ENCODE measurements at regions of chr20 and their contacts with region 1.

Region 1: DNA sequence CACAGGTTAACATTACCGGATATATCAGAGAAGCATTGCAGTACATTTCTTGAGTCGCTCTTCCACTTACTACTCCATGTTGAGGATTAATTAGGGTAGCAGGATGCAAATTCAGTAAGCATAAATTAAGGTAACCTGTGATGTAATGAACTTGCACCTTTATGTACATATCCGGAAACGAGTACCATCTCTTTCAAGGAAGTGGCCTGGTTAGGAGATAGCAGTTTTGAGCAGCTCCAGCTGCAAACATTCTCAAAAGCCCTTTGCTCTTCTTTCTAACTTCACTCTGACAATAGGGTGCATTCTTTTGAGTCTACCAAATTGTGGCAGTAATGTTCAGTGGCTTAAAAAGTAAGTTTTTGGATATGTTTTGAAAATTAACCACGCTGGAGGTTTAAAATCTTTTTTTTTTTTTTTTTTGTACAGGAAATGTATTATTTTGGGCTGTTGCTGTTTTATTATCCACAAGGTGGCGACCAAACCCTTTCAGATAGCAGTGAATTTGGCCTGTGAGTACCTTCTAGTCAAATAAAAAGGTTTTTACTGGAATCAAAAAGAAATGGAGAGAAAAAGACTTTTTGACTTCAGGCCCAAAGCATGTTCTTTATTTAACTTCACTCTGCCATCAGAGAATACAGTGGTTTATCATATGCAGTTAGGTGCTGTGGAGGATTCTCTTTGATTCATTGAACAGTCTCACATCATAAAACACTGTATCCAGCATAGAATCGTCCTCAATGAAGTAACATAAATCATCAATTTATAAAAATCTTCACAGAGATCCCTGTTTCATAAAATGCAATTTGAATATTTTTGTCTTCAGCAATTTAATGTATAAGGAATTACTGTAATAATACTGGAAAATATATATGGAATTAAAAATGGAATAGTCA is 8.9 kb downstream of the FAM217B start:
- DNase-seq: peak in 7 of 9 donors; percentile 56 to 76 (median 72)
- ATAC-seq: peak; percentile 90
- H3K4me3 ChIP-seq: no peak overlapping the region
- H3K4me3 Mint-ChIP-seq: peak overlapping the region in 9 of 10 donors; percentile 34 to 80 (median 70)
- H3K27ac ChIP-seq: peak overlapping the region; percentile 55
- H3K27ac Mint-ChIP-seq: peak overlapping the region; percentile 82 to 95 (median 89)
- H3K4me1 ChIP-seq: peaks cover 0 to 10% of the 10 kb centered on the region in 2 donors
- H3K4me1 Mint-ChIP-seq: peaks cover 11 to 38% (median 22%) of the 10 kb centered on the region in 7 donors
- H3K27me3 ChIP-seq: no peaks in the 10 kb centered on the region
- H3K27me3 Mint-ChIP-seq: no peaks in the 10 kb centered on the region

Region 2: GRCh38 chr20:60057123-60057801 is 108.2 kb after region 1 on chr20:
- CTCF ChIA-PET with region 1: no interaction called
- POLR2A ChIA-PET with region 1: no interaction called
- intact Hi-C with region 1: loop called (anchors 1 kb)
- DNase-seq: peak; percentile 40 to 76 (median 68)
- ATAC-seq: peak; percentile 46
- H3K4me3 ChIP-seq: peak overlapping the region; percentile 41
- H3K4me3 Mint-ChIP-seq: peak overlapping the region; percentile 46 to 83 (median 58)
- H3K27ac ChIP-seq: no peak overlapping the region
- H3K27ac Mint-ChIP-seq: peak overlapping the region; percentile 4 to 90 (median 83)
- H3K4me1 ChIP-seq: peaks cover 46 to 47% of the 10 kb centered on the region in 2 donors
- H3K4me1 Mint-ChIP-seq: peaks cover 43 to 67% (median 58%) of the 10 kb centered on the region in 7 donors
- H3K27me3 ChIP-seq: no peaks in the 10 kb centered on the region
- H3K27me3 Mint-ChIP-seq: peaks cover 0 to 8% (median 0%) of the 10 kb centered on the region in 5 donors

Region 3: DNA sequence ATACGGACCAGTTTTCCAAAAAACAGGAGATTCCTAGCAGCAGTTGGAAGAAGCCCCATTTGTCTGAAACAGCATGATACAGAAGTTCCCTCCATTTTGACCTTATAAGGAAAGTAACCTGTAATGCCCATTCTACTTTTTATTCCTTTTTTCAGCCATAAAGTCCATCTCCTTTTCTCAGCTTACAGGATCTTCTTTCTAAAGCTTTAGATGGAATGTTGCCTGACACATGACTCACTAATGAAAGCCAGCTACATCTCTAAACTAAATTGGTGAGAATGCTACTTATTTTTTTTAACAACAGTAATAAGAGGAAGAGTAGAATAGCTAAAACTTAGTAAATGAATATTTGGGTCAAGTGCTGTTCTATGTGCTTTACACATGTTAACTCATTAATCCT is 243.3 kb after region 1 on chr20:
- CTCF ChIA-PET with region 1: no interaction called
- POLR2A ChIA-PET with region 1: no interaction called
- intact Hi-C with region 1: no loop called
- DNase-seq: no peak
- ATAC-seq: no peak
- H3K4me3 ChIP-seq: no peak overlapping the region
- H3K4me3 Mint-ChIP-seq: no peak overlapping the region
- H3K27ac ChIP-seq: no peak overlapping the region
- H3K27ac Mint-ChIP-seq: no peak overlapping the region
- H3K4me1 ChIP-seq: no peaks in the 10 kb centered on the region
- H3K4me1 Mint-ChIP-seq: peaks cover 0 to 1% (median 0%) of the 10 kb centered on the region in 7 donors
- H3K27me3 ChIP-seq: no peaks in the 10 kb centered on the region
- H3K27me3 Mint-ChIP-seq: peaks cover 0 to 22% (median 10%) of the 10 kb centered on the region in 5 donors

Region 4: DNA sequence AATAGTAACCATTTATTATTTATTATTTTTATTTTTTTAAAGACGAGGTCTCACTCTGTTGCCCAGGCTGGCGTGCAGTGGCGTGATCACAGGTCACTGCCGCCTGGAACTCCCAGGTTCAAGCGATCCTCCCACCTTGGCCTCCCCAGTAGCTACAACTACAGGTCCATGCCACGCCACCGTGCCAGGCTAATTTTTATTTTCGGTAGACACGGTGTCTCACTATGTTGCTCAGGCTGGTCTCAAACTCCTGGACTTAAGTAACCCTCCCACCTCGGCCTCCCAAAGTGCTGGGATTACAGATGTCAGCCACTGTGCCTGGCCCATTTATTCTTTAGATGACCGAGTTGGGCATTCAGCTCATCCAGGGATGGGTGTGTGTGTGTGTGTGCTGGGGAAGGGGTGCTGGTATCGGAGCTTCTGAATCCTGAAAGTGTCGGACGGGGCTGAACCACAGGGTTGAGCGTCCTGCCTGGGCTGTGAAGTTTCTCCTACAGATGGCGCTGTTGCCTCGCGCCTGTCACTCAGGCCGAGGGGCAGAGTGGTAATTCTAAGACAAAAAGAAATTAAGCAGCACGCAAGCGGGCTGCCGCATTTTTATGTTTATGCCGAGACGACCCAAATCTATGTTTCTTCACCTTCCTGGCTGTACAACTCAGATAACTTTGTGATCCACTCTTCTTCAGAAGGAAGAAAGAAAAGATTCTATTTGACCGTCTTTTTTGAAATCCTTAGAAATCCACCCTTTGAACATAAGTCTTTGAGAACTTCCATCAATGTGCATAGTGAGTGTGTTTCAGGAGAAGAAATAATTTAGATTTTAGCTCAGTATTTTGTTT is 261.9 kb after region 1 on chr20:
- CTCF ChIA-PET with region 1: no interaction called
- POLR2A ChIA-PET with region 1: no interaction called
- intact Hi-C with region 1: loop called in 1 of 2 experiments (anchors 5 kb)
- DNase-seq: peak in 8 of 9 donors; percentile 20 to 61 (median 46)
- ATAC-seq: peak; percentile 81
- H3K4me3 ChIP-seq: no peak overlapping the region
- H3K4me3 Mint-ChIP-seq: peak overlapping the region in 1 of 10 donors; percentile 20
- H3K27ac ChIP-seq: no peak overlapping the region
- H3K27ac Mint-ChIP-seq: no peak overlapping the region
- H3K4me1 ChIP-seq: no peaks in the 10 kb centered on the region
- H3K4me1 Mint-ChIP-seq: peaks cover 0 to 17% (median 4%) of the 10 kb centered on the region in 7 donors
- H3K27me3 ChIP-seq: no peaks in the 10 kb centered on the region
- H3K27me3 Mint-ChIP-seq: peaks cover 0 to 16% (median 2%) of the 10 kb centered on the region in 5 donors

Region 5: GRCh38 chr20:61120595-61121515 is 1171.8 kb after region 1 on chr20:
- CTCF ChIA-PET with region 1: no interaction called
- POLR2A ChIA-PET with region 1: no interaction called
- intact Hi-C with region 1: loop called in 1 of 2 experiments (anchors 5 kb)
- DNase-seq: peak in 7 of 9 donors; percentile 2 to 40 (median 23)
- ATAC-seq: peak; percentile 67
- H3K4me3 ChIP-seq: no peak overlapping the region
- H3K4me3 Mint-ChIP-seq: no peak overlapping the region
- H3K27ac ChIP-seq: no peak overlapping the region
- H3K27ac Mint-ChIP-seq: peak overlapping the region in 1 of 9 donors; percentile 26
- H3K4me1 ChIP-seq: no peaks in the 10 kb centered on the region
- H3K4me1 Mint-ChIP-seq: peaks cover 0 to 6% (median 5%) of the 10 kb centered on the region in 7 donors
- H3K27me3 ChIP-seq: no peaks in the 10 kb centered on the region
- H3K27me3 Mint-ChIP-seq: peaks cover 0 to 5% (median 0%) of the 10 kb centered on the region in 5 donors

Region 6: GRCh38 chr20:61263084-61263695 is 1314.1 kb after region 1 on chr20:
- CTCF ChIA-PET with region 1: no interaction called
- POLR2A ChIA-PET with region 1: no interaction called
- intact Hi-C with region 1: loop called in 1 of 2 experiments (anchors 2 kb)
- DNase-seq: peak in 5 of 9 donors; percentile 6 to 38 (median 8)
- ATAC-seq: no peak
- H3K4me3 ChIP-seq: no peak overlapping the region
- H3K4me3 Mint-ChIP-seq: no peak overlapping the region
- H3K27ac ChIP-seq: no peak overlapping the region
- H3K27ac Mint-ChIP-seq: no peak overlapping the region
- H3K4me1 ChIP-seq: no peaks in the 10 kb centered on the region
- H3K4me1 Mint-ChIP-seq: no peaks in the 10 kb centered on the region
- H3K27me3 ChIP-seq: peaks cover 0 to 3% of the 10 kb centered on the region in 2 donors
- H3K27me3 Mint-ChIP-seq: peaks cover 0 to 42% (median 20%) of the 10 kb centered on the region in 5 donors